Left cardiac atrium (tissue), 4 donors: ENCODE measurements at regions of chr19 and their contacts with region 1.

Region 1: GRCh38 chr19:17075035-17075863 is at the starts of genes HAUS8 and MYO9B:
- DNase-seq: peak; percentile 99
- ATAC-seq: peak; percentile 95 to 97
- total RNA-seq, gene HAUS8: 3.9 to 5.0 TPM
- total RNA-seq, gene MYO9B: 32.5 to 44.6 TPM

Region 2: DNA sequence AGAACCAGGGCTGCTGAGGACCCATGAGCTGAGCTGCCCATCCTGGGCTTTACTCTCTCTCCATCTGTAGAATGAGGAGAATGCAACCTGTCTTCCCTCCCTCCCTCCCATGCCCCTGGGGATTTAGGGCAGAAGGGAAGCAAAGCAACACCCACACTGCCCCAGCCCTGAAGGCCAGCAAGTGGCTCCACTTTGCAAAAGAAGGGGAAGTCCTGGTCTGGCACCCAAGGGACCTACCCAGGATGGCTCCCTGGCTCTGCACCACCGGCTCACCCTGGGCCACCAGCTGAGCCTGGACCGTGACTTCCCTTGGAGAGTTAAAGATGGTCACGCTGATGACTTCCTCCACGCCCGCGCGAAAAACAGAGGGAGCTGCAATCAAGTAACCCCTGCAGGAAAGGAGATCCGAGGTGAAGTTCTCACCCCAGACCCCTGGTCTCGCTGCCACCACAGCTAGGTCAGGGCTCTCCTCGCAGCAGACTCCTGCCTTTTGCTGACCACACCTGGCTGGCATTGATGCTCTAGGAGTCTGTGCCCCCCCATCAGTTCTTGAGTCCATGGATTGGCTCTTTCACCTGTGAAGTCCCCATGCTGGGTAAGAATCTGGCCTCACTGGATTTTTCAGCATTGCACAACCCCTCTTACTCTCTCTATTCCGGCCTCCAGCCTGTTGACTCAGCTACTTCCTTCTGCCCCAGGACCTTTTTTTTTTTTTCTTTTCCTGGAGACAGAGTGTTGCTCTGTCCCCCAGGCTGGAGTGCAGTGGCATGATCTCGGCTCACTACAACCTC is 53.3 kb before region 1 on chr19:
- intact Hi-C with region 1: no loop called
- DNase-seq: no peak
- ATAC-seq: peak; percentile 38 to 53

Region 3: DNA sequence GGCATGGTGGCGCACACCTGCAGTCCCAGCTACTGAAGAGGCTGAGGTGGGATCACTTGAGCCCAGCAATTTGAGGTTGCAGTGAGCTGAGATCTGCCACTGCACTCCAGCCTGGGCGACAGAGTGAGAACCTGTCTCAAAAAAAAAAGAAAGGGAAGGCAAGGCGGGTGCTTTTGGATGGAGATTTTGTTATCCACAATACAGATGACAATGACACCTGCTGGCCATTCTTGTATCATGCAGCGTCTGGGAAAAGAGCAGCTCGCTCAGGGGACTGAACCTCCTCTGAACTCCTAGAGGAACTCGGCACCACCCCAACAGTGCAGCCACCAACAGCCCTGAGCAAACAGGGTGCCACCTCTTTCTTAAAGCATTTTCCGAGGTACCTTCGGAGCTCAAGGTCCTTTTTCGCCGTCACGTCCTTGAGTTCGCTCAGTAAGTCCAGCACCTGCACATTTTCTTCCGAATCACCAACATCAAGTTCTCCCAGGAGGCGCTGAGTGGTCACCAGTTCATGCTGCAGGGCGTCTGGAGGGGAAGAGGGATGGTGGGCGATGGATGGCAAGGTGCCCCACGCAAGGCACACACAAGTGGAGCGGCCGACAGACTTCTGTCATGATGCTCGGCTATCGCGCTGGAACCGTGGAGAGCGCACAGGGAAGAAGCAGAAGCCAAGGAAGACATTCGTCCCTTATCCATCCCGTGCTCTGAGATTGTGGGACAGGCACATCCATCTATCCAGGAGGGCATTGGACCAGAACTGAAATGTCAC is 22.6 kb before region 1 on chr19:
- intact Hi-C with region 1: no loop called
- DNase-seq: no peak
- ATAC-seq: peak in 1 of 2 donors; percentile 44

Region 4: GRCh38 chr19:17135001-17135853 is 60.0 kb after region 1 on chr19:
- intact Hi-C with region 1: loop called (anchors 5 to 10 kb)
- DNase-seq: peak; percentile 97
- ATAC-seq: peak; percentile 94 to 95

Region 5: GRCh38 chr19:17149393-17150135 is 74.3 kb after region 1 on chr19:
- intact Hi-C with region 1: loop called in 1 of 2 experiments (anchors 10 kb)
- DNase-seq: no peak
- ATAC-seq: peak in 1 of 2 donors; percentile 12

Region 6: GRCh38 chr19:17215125-17215971 is 140.1 kb after region 1 on chr19 and contains the start of gene USE1:
- intact Hi-C with region 1: loop called in 1 of 2 experiments (anchors 5 kb)
- DNase-seq: peak; percentile 92
- ATAC-seq: peak; percentile 93 to 96
- total RNA-seq, gene USE1: 22.5 to 23.4 TPM